Natural killer cell (primary cell): ENCODE measurements at regions of chr6 and their contacts with region 1.

Region 1: GRCh38 chr6:129936329-129937165 is 75.4 kb upstream of the TMEM244 start:
- DNase-seq: peak in 1 of 2 donors; percentile 74
- ATAC-seq: peak in 2 of 3 donors; percentile 49 to 66
- H3K4me3 ChIP-seq: no peak overlapping the region
- H3K4me3 Mint-ChIP-seq: no peak overlapping the region
- H3K27ac ChIP-seq: no peak overlapping the region
- H3K27ac Mint-ChIP-seq: no peak overlapping the region
- H3K4me1 ChIP-seq: no peaks in the 10 kb centered on the region
- H3K4me1 Mint-ChIP-seq: no peaks in the 10 kb centered on the region
- H3K27me3 ChIP-seq: peaks cover 2% of the 10 kb centered on the region
- H3K27me3 Mint-ChIP-seq: peaks cover 23 to 45% of the 10 kb centered on the region in 2 donors
- CTCF ChIP-seq: peak; percentile 69

Region 2: DNA sequence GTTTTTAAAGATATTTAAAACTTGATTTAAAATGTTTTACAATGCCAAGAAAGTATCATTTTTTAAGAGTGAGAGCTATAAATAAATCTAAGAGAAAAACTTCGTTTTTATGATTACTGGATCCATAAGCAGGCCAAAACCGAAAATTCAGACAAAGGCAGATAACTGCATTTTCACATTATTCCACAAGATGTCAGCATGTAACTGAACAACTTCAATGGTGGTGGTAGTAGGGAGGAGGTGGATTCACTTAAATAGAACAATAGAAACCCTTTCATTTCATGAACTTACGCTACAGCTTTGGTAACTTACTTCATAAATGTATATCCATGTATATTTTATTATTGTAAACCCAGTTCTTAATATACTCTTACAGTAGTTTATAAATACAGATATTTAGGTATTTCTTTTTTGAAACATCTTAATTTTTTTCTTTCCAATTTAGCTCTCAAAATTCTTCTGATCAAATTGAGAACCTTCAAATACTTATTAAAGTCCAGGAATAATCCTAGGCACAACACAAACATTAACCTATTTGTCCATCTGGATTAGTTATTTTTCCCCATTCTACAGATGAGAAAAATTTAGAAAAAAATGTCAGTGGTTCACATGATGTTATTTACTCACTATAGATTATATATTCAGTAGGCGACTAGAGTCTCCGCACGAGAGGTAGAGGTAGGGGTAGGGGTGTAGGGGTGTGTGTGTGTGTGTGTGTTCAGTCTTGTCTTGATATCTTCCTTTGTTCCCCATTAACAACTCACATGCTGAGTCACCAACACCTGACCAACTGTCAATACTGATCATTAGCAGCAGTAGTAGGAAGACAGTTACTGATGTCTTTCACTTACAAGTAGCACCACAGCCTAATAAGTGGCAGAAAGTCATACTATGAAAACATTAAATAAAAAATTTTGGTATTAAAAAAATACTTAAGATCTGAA is 338.0 kb before region 1 on chr6:
- intact Hi-C with region 1: loop called (anchors 1 kb)
- DNase-seq: peak in 1 of 2 donors; percentile 84
- ATAC-seq: peak; percentile 87 to 98 (median 94)
- H3K4me3 ChIP-seq: no peak overlapping the region
- H3K4me3 Mint-ChIP-seq: no peak overlapping the region
- H3K27ac ChIP-seq: no peak overlapping the region
- H3K27ac Mint-ChIP-seq: no peak overlapping the region
- H3K4me1 ChIP-seq: no peaks in the 10 kb centered on the region
- H3K4me1 Mint-ChIP-seq: no peaks in the 10 kb centered on the region
- H3K27me3 ChIP-seq: no peaks in the 10 kb centered on the region
- H3K27me3 Mint-ChIP-seq: no peaks in the 10 kb centered on the region
- CTCF ChIP-seq: peak; percentile 87